Astrocyte of the cerebellum (primary cell): ENCODE measurements at regions of chr14 and their contacts with region 1.

Region 1: GRCh38 chr14:81464247-81465002 is 64.3 kb upstream of the STON2 start:
- DNase-seq: peak; percentile 28
- H3K4me3 ChIP-seq: peak overlapping the region; percentile 24
- CTCF ChIP-seq: peak; percentile 76

Region 2: DNA sequence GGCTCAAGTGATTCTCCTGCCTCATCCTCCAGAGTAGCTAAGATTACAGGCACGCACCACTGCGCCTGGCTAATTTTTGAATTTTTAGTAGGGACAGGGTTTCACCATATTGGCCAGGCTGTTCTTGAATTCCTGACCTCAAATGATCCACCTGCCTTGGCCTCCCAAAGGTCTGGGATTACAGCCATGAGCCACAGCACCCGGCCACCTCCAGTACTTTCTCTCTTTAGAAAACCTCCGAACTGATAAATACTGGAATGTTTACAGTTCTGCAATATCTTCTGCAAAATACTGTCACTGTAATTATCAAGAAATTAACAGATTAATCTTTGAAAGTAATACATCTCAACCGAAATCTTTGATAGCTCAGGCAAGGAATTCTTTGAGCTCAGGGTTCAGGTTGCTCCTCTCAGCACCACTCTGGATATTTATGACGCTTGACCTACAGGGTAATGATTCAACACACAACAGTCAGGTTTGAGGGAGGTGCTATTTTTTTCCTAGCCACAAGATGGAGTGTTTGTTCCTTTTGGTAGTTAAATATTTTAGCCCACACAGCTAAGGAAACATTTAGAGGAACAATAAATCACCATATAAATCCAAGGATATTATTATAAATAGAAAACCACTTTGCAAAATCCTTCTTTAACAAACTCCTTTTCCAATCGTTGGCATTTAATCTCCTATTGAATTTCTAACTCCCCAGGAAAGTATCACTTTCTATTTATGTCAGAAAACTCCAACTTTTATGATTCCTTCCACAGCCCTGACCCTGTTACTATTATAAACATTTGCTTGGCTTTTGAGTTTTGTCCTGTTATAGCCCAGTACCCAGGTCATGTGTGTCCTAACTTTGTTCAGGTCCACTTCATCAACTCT is 195.1 kb before region 1 on chr14:
- in situ Hi-C with region 1: loop called (anchors 25 kb)
- DNase-seq: peak; percentile 63
- H3K4me3 ChIP-seq: no peak overlapping the region
- CTCF ChIP-seq: peak; percentile 65

Region 3: DNA sequence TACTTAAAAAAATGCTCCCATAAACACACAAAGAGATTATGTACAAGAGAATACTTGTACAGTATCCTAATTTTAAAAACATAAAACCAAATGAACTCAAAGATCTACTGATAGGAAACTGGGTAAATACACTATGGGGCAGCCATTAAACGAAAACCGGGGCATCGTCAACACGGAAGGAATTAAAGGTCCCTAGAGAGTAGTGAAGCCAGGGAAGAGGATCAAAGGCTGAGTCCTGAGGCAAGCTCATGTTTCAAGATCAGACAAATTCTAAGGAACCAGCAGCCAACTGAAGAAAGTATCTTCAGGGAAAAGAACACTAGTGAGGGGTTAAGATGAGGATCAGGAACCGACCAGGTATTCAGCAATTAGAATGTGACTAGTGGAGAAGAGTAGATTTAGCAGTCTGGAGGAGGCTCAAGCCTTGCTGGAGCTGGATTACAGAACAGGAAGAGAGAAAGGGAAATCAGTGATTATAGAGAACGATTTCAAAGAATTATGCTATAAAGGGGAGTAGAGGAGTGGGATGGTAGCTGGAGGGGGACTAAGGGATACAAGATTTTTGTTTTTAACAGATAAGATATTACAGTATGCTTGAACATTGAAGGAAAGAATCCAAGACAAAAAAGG is 45.5 kb after region 1 on chr14:
- in situ Hi-C with region 1: no loop called
- DNase-seq: no peak
- H3K4me3 ChIP-seq: no peak overlapping the region
- CTCF ChIP-seq: no peak